Sciatic nerve (tissue), 2 donors: ENCODE measurements at regions of chr1 and their contacts with region 1.

Region 1: GRCh38 chr1:39646232-39647081 is 7.0 kb upstream of the HEYL start:
- DNase-seq: peak; percentile 85
- ATAC-seq: peak; percentile 94

Region 2: GRCh38 chr1:39481289-39481688 is 165.2 kb before region 1 on chr1:
- intact Hi-C with region 1: loop called (anchors 2 kb)
- DNase-seq: no peak
- ATAC-seq: no peak

Region 3: GRCh38 chr1:39491146-39491921 is 155.1 kb before region 1 on chr1 and contains the start of gene BMP8A:
- intact Hi-C with region 1: no loop called
- DNase-seq: peak; percentile 70
- ATAC-seq: no peak
- total RNA-seq, gene BMP8A: 8.3 TPM